ENCODE measurements at regions of chr12 and their contacts with region 1.

Region 1: GRCh38 chr12:122793685-122794106 is 19.3 kb downstream of the CCDC62 start:
- DNase-seq: no peak
- ATAC-seq: peak; percentile 55
- H3K4me3 Mint-ChIP-seq: no peak overlapping the region
- H3K27ac Mint-ChIP-seq: no peak overlapping the region
- H3K4me1 Mint-ChIP-seq: peaks cover 3% of the 10 kb centered on the region
- H3K27me3 Mint-ChIP-seq: no peaks in the 10 kb centered on the region
- CTCF ChIP-seq: peak; percentile 72

Region 2: DNA sequence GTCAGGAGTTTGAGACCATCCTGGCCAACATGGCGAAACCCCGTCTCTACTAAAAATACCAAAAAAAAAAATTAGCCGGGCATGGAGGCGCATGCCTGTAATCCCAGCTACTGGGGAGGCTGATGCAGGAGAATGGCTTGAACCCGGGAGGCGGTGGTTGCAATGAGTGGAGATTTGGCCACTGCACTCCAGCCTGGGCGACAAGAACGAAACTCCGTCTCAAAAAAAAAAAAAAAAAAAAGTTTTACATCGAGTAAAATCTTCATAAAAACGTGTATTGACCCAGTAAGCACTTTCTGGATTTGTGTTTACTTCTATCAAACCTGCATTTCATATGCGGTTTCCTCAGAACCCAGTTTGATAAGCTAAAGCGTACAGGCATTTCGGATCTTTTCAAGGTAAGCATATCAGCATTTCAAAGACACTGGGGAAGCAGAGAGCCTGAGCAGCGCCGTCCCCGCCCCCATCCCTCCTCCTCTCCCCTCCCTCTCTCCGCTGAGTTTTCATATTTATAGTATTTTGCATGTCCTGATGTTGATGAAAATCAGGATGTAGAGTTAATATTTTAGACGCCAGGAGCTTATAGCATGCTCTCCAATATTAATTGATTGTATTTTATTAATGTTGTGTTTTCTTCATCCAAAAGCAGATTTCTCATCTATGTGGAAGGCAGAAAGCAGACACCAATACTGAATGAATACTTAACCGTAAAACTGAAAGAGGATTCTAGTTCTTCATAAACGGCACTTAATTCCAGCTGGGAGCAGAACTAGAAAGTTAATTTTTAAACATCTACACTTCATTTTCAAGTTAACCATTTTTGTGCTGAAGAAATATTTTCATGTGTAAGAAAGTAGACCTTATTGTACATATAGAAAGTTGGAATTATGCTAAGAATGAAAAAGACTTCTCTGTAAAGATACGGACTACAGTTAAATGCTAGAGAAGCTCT is 32.4 kb after region 1 on chr12:
- CTCF ChIA-PET with region 1: interaction called, 11 read pairs
- POLR2A ChIA-PET with region 1: no interaction called
- DNase-seq: no peak
- ATAC-seq: peak; percentile 80
- H3K4me3 Mint-ChIP-seq: peak overlapping the region; percentile 55
- H3K27ac Mint-ChIP-seq: no peak overlapping the region
- H3K4me1 Mint-ChIP-seq: peaks cover 13% of the 10 kb centered on the region
- H3K27me3 Mint-ChIP-seq: peaks cover 23% of the 10 kb centered on the region
- CTCF ChIP-seq: no peak

Measured in WTC11 (cell line).